OCI-LY7 (cell line): ENCODE measurements at regions of chr1 and their contacts with region 1.

Region 1: GRCh38 chr1:9629445-9630201 is 21.9 kb upstream of the PIK3CD start:
- DNase-seq: peak; percentile 69
- H3K4me3 ChIP-seq: no peak overlapping the region
- H3K27ac ChIP-seq: peak overlapping the region; percentile 15
- H3K4me1 ChIP-seq: peaks cover 45% of the 10 kb centered on the region
- CTCF ChIP-seq: no peak

Region 2: DNA sequence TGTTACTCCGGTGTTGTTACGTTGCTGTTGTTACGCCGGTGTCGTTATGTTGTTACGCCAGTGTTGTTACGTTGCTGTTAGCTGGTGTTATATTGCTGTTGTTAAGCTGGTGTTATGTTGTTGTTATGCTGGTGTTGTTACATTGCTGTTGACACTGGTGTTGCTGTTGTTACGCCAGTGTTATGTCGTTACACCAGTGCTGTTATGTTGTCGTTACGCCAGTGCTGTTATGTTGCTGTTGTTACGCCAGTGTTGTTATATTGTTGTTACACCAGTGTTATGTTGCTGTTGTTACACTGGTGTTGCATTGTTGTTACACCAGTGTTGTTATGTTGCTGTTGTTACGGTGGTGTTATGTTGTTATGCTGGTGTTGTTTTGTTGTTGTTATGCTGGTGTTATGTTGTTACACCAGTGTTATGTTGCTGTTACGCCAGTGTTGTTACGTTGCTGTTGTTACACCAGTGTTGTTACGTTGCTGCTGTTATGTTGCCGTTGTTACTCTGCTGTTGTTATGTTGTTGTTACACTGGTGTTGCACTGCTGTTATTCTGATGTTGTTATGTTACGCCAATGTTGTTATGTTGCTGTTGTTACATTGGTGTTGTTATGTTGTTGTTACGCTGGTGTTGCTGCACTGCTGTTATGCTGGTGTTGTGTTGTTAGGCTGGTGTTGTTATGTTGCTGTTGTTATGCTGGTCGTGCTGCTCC is 369.4 kb before region 1 on chr1:
- CTCF ChIA-PET with region 1: no interaction called
- POLR2A ChIA-PET with region 1: no interaction called
- intact Hi-C with region 1: no loop called
- DNase-seq: no peak
- H3K4me3 ChIP-seq: no peak overlapping the region
- H3K27ac ChIP-seq: no peak overlapping the region
- H3K4me1 ChIP-seq: no peaks in the 10 kb centered on the region
- CTCF ChIP-seq: no peak

Region 3: GRCh38 chr1:9573723-9574122 is 55.9 kb before region 1 on chr1:
- CTCF ChIA-PET with region 1: no interaction called
- POLR2A ChIA-PET with region 1: no interaction called
- intact Hi-C with region 1: no loop called
- DNase-seq: peak; percentile 55
- H3K4me3 ChIP-seq: no peak overlapping the region
- H3K27ac ChIP-seq: no peak overlapping the region
- H3K4me1 ChIP-seq: peaks cover 17% of the 10 kb centered on the region
- CTCF ChIP-seq: peak; percentile 75

Region 4: DNA sequence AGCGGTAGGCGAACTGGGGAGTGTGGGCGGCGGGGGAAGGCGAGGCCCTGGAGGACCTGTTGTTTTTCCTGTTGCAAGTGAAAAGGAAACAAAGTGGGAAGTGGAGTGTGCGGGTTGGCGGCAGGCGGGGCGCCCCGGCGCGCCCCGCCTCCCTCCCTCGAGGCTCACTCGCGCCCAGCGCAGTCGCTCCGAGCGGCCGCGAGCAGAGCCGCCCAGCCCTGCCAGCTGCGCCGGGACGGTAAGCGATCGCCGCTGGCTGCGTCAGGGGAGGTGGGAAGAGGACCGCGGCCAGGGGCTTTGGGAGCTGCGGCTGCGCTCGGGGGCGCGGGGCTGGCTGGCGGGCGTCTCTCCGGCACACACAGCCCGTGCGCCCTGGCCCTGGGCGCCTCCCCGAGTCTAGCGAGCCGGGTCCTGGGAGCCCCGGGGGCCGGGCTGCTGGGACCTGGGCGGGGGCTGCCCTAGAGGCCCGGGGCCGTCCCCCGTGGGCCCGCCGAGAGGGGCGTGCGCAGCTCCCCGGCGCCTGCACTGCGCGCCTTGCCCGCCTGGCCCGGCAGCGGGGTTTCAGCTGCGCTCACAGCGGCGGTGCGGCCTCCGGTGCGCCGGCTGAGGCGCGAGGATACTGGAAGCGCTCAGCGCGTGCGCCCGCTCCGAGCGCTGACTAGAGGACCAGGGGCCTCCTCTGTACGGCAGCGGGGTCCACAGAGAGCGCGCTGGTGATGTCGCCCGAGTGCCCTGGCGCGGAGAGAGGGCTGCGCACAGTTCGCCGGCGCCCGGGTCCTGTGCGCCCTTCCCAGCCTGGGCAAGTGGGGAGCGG is 22.1 kb after region 1 on chr1 and contains the start of gene PIK3CD:
- CTCF ChIA-PET with region 1: interaction called, 3 read pairs
- POLR2A ChIA-PET with region 1: interaction called, 7 read pairs
- intact Hi-C with region 1: loop called (anchors 1 kb)
- DNase-seq: peak; percentile 64
- H3K4me3 ChIP-seq: peak within 1 kb of the TSS; percentile 70
- H3K27ac ChIP-seq: peak within 1 kb of the TSS; percentile 42
- H3K4me1 ChIP-seq: peaks cover 51% of the 10 kb centered on the region
- CTCF ChIP-seq: 0 out of 2 replicates have a peak, but pooled peaks have one; percentile 16
- total RNA-seq, gene PIK3CD: 7.5 and 13.6 TPM in 2 replicates

Region 5: GRCh38 chr1:9687120-9687873 is 57.7 kb after region 1 on chr1:
- CTCF ChIA-PET with region 1: no interaction called
- POLR2A ChIA-PET with region 1: interaction called, 3 read pairs
- intact Hi-C with region 1: loop called (anchors 2 kb)
- DNase-seq: peak; percentile 82
- H3K4me3 ChIP-seq: peak overlapping the region; percentile 66
- H3K27ac ChIP-seq: no peak overlapping the region
- H3K4me1 ChIP-seq: peaks cover 29% of the 10 kb centered on the region
- CTCF ChIP-seq: no peak

Region 6: DNA sequence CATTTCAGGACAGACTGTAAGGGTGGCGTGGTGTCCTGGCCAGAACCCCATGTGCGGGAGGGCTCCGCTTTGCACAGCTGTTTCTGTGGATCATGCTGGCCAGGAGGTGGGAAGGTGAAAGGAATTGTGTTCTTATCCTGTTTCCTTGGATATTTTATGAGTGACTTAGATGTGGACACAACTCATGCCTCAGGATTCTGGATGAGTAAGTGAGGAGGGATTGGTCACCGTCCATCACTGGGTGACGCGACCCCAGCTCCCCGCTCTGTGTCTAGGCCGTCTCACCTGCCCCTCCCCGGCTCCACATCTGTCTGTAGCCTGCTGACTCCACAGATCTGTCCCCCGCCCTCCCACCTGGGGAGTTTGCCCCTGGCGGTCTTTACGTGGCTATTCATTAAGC is 70.7 kb after region 1 on chr1:
- CTCF ChIA-PET with region 1: no interaction called
- POLR2A ChIA-PET with region 1: interaction called, 6 read pairs
- intact Hi-C with region 1: loop called (anchors 5 kb)
- DNase-seq: no peak
- H3K4me3 ChIP-seq: no peak overlapping the region
- H3K27ac ChIP-seq: no peak overlapping the region
- H3K4me1 ChIP-seq: peaks cover 15% of the 10 kb centered on the region
- CTCF ChIP-seq: no peak

Region 7: DNA sequence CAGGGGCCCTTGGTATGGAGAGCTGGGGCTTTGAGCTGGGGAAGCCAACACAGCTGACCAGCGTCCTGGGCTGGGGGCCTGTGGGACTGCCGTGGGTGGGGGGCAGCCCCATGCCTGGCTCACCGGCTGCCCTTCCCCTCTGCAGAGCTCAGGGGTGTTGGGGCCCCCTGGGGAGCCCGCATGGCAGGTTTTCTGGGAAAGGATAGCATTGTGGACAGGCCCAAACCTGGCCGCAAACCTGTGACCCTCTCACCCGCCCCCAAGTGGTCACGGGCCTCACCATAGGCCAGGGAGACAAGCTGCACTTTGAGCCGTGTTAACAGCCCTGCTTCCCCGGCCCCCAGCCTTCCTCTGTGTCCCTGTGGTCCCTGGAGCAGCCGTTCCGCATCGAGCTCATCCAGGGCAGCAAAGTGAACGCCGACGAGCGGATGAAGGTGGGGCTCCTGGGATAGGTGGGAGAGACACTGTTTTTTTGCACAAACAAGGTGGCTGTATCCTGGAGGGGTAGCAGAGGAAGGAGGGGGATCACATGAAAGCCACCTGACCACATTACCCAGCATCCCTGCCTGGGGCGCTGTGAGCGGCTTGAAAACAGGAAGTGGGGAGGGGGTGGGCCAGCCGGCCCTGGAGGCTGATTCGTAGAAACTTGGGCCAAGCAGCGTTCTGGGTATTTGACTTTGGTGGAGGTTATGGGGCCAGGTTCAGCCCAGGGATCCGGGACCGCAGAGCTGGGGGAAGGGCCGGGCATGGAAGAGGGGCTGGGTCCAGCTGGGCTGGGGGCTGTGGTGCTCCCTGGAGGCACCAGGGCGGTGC is 87.8 kb after region 1 on chr1:
- CTCF ChIA-PET with region 1: no interaction called
- POLR2A ChIA-PET with region 1: interaction called, 8 read pairs
- intact Hi-C with region 1: loop called (anchors 1 kb)
- DNase-seq: peak; percentile 95
- H3K4me3 ChIP-seq: peak overlapping the region; percentile 79
- H3K27ac ChIP-seq: peak overlapping the region; percentile 73
- H3K4me1 ChIP-seq: peaks cover 51% of the 10 kb centered on the region
- CTCF ChIP-seq: peak; percentile 25; the same call in 1 of the 2 replicates

Region 8: GRCh38 chr1:9867408-9868243 is 238.0 kb after region 1 on chr1:
- CTCF ChIA-PET with region 1: interaction called, 7 read pairs
- POLR2A ChIA-PET with region 1: no interaction called
- intact Hi-C with region 1: loop called (anchors 1 kb)
- DNase-seq: peak; percentile 87
- H3K4me3 ChIP-seq: no peak overlapping the region
- H3K27ac ChIP-seq: no peak overlapping the region
- H3K4me1 ChIP-seq: peaks cover 59% of the 10 kb centered on the region
- CTCF ChIP-seq: peak; percentile 97